ENCODE measurements at regions of chr12 and their contacts with region 1.

Region 1: GRCh38 chr12:50734409-50735263 is 29.3 kb upstream of the ATF1 start:
- DNase-seq: peak; percentile 58

Region 2: DNA sequence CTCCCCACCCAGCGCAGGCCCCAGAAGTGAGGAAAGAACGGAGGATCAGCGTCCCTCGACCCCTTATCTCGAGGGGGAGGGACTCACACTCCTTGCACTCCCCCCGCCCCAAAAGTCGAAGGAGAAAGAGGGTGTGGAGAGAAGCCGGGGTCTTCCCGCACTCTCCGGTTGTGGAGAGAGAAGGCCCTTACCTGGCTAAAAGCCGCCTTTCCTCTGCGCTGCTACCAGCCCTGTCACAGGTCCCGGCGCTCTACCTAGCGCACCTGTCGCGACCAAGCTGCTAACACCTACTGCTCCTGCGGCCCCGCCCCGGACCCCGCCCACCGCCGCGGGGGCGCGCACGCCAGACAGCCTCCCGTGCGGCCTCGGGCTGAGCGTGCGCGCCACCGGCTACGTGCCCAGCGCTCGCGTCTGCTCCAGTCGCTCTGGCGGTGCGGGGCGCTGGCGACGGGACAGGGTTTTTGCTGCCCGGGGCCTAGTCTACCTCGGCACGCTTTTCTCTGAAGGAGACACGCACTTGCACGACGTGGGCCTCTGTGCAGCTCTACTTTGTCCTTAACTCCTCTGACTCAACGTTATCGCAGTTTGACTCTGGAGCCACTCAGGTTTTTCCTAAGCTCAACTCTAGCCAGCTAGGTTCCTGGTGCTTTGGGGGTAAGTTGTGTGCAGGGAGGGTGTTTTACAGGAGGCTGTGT is 451.3 kb before region 1 on chr12 and contains the start of gene LIMA1:
- CTCF ChIA-PET with region 1: no interaction called
- POLR2A ChIA-PET with region 1: no interaction called
- DNase-seq: peak; percentile 97

Region 3: DNA sequence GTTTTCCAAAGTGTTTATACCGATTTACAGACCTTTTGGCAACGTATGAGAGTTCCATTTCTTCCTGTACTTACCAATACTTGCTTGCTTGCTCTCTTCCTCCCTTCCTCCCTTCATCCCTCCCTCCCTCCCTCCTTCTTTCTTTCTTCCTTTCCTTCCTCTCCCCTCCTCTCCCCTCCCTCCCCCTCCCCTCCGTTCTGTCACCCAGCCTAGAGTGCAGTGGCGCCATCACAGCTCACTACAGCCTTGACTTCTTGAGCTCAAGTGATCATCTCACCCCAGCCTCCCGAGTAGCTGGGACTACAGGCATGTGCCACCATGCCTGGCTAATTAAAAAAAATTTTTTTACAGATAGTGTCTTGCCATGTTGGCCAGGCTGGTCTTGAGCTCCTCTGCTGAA is 189.4 kb before region 1 on chr12:
- CTCF ChIA-PET with region 1: interaction called, 10 read pairs
- POLR2A ChIA-PET with region 1: no interaction called
- DNase-seq: no peak

Region 4: GRCh38 chr12:50699940-50700339 is 34.7 kb before region 1 on chr12:
- CTCF ChIA-PET with region 1: no interaction called
- POLR2A ChIA-PET with region 1: no interaction called
- DNase-seq: no peak